GM10248 (cell line): ENCODE measurements at regions of chr12 and their contacts with region 1.

Region 1: DNA sequence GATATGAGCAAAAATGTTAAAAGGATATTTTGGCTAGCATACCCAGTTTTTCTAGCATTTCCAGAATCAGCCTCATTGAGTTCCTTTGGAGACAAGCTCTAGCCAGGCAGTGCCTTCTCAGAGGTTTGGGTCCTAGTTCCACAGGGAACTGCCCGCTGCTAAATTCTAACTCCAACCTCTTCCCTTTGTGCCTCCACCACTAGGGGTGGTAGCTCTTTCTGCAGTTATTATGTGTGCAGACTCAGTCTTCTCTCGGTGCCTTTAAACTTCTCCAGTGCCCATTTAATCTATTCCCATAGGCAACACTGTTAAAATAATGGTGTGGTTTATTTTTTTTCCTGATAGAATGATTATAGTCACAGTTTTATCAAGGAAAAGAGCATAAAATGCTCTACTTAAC is 21.5 kb upstream of the SLC25A3 start:
- DNase-seq: no peak
- CTCF ChIP-seq: no peak

Region 2: DNA sequence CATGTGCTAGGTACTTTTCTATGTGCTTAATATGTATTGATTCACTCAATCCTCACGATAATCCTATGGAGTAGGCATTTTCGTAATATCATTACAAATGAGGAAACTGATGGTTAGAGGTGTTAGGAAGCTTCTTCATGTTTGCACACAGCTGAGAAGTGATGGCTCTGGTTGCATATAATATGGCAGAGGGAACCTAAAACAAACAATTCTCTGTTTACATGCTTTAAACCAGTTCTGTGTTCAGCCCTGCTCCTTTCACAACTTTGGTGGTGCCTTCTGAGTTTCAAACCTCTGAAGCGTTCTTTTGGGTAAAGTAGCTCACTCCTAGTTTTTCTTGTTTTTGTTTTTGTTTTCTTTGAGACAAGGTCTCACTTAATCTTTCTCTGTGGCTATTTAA is 21.2 kb before region 1 on chr12:
- CTCF ChIA-PET with region 1: interaction called, 25 read pairs
- POLR2A ChIA-PET with region 1: no interaction called
- DNase-seq: no peak
- CTCF ChIP-seq: no peak

Region 3: DNA sequence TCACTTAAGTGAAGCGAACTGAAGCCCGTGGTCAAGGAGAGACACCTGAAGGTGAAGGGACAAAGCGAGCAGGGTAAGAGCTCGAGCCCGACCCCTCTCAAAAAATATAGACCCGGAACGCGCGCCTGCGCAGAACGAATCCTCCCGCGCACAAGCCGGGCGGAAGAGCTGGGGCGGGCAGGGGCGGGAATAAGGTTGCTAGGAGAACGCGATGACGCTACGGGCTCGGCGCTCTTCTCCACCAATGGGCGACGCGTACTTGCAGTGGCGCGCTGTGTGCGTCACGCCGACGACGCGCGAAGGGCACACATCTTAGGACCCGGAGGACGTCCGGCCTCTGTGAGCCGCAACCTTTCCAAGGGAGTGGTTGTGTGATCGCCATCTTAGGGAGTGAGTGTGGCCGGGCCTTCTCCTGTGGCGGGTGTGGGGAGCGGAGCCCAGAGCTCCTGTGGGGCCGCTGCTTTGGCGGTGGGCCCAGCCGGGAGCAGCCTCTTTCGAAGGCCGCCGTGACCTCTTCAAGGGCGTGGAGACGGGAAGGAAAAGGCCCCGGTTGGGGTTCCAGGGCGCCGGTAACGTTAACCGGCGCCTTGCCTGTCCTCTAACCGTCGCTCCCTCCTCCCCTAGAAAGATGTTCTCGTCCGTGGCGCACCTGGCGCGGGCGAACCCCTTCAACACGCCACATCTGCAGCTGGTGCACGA is 21.5 kb after region 1 on chr12 and contains the start of gene SLC25A3:
- CTCF ChIA-PET with region 1: interaction called, 13 read pairs
- POLR2A ChIA-PET with region 1: no interaction called
- DNase-seq: peak; percentile 98
- CTCF ChIP-seq: no peak

Region 4: GRCh38 chr12:98646294-98647090 is 74.5 kb after region 1 on chr12:
- CTCF ChIA-PET with region 1: interaction called, 32 read pairs
- POLR2A ChIA-PET with region 1: no interaction called
- DNase-seq: no peak
- CTCF ChIP-seq: no peak

Region 5: GRCh38 chr12:98653866-98654493 is 82.0 kb after region 1 on chr12:
- CTCF ChIA-PET with region 1: interaction called, 32 read pairs
- POLR2A ChIA-PET with region 1: no interaction called
- DNase-seq: peak; percentile 42
- CTCF ChIP-seq: peak; percentile 58

Region 6: DNA sequence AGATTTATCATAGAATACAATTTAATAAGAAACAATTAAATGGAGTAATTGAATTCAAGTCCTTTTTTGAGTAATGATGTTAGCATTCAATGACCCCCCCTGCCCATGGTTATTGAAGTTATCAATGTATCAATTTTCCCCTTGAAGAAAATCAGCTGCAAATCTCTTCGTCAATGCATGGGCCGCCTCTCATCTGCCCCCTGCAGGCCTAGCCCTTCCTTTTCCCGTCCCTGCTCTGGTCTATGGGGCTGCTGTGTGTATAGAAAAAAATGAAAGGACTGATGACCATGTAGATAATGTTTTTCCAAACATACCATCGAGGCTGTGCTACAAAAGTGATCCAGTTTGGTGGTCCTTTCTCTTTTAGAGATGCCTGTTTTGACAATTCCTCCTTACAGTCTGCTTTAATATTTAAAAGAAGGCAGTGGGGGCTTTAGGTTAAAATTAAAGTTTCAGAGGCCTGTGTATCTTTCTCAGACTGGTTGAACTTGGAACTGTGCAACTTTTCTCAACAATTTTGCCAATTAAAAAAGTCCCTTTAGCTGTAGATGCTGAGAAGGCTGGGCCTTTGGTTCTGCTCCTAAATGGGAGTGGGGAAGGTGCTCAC is 171.4 kb after region 1 on chr12:
- CTCF ChIA-PET with region 1: interaction called, 13 read pairs
- POLR2A ChIA-PET with region 1: interaction called, 4 read pairs
- DNase-seq: peak; percentile 44
- CTCF ChIP-seq: peak; percentile 52

Region 7: GRCh38 chr12:98870504-98870903 is 298.5 kb after region 1 on chr12:
- CTCF ChIA-PET with region 1: no interaction called
- POLR2A ChIA-PET with region 1: no interaction called
- DNase-seq: no peak
- CTCF ChIP-seq: no peak